Posterior vena cava (tissue), 2 donors: ENCODE measurements at regions of chr9 and their contacts with region 1.

Region 1: GRCh38 chr9:136944519-136945279 is at the starts of genes C8G and FBXW5:
- DNase-seq: peak; percentile 98
- total RNA-seq, gene C8G: 1.4 TPM
- total RNA-seq, gene FBXW5: 95.0 to 100 TPM

Region 2: DNA sequence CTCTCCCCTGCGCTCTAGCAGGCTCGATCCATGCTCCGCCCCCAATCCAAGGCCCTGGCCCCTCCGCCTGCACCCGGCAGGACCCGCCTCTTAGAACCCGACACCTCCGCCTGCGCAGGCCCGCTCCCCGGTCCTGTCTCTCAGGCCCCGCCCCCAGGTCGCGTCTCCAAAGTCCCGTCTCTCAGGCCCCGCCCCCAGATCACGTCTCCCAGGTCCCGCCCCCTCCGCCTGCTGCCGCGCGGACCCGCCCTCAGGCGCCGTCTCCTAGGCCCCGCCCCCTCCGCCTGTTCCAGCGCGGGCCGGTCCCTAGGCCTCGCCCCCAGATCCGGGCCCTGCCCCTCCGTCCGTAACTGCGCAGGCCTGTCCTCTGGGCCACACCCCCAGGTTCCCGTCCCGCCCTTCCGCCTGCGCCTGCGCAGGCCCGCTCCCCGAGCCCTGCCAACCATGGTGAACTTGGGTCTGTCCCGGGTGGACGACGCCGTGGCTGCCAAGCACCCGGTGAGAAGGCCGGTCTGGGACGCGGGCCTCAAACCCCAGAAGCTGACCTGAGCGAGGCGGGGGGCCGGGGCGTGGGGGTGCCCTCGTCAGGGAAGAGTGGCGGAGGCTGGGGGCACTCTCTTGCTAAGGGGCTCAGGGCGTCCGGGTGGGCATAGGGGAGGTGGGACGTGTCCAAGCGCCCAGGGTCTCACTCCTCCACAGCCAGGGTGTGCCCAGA is 153.6 kb before region 1 on chr9 and contains the start of gene TMEM141:
- intact Hi-C with region 1: loop called in 1 of 2 experiments (anchors 5 kb)
- DNase-seq: peak; percentile 100
- total RNA-seq, gene TMEM141: 28.1 to 33.9 TPM

Region 3: DNA sequence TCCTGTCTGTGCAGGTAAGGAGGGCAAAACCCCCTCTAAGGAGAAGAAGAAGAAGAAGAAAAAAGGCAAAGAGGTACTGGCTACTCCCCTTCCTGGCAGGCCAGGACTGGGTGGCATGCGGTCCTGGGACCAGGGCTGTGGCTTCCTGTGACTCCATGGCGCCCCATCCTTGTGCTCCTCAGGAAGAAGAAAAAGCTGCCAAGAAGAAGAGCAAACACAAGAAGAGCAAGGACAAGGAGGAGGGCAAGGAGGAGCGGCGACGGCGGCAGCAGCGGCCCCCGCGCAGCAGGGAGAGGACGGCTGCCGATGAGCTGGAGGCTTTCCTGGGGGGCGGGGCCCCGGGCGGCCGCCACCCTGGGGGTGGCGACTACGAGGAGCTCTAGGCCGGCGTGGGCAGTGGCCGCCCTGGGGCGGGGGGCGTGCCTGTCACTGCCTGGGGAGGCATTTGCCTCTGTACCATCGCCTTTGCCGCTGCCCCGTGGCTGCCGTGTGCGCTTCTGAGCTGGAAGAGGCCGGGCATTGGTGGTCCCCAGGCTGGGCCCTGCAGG is 104.5 kb before region 1 on chr9:
- intact Hi-C with region 1: loop called in 1 of 2 experiments (anchors 5 kb)
- DNase-seq: no peak

Region 4: DNA sequence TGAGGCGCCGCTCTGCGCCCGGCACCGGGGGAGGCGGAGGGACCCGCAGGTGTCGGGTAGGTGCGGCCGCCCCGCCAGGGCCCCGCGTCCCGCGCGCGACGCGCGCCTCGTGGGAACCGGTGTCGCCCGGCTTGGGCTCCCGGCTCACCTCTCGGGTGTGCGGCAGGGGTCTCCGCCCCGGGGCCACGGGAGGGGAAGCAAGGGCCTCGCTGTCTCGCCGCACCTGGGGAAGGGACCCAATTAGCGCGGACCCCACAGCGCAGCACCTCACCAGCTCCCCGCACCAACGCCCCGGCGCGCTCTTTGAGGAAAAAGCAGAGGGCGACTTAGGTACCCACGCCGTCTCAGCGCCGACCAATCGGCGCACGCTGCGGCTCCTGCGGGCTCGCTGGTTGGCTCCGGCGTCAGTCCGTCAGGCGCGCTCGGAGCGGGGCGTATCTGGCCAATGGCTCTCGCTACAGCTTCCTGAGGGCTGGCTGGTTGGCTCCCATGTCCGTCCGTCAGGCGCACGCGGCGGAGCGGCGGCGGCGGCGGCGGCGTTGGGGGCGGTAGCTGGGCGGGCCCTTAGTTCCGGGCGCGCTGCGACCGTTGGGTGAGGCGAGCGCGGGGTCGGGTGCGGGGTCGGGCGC is 58.6 kb before region 1 on chr9 and contains the start of gene TRAF2:
- intact Hi-C with region 1: loop called in 1 of 2 experiments (anchors 5 kb)
- DNase-seq: peak; percentile 99
- total RNA-seq, gene TRAF2: 8.7 to 10.9 TPM